ENCODE measurements at regions of chr21 and their contacts with region 1.

Region 1: DNA sequence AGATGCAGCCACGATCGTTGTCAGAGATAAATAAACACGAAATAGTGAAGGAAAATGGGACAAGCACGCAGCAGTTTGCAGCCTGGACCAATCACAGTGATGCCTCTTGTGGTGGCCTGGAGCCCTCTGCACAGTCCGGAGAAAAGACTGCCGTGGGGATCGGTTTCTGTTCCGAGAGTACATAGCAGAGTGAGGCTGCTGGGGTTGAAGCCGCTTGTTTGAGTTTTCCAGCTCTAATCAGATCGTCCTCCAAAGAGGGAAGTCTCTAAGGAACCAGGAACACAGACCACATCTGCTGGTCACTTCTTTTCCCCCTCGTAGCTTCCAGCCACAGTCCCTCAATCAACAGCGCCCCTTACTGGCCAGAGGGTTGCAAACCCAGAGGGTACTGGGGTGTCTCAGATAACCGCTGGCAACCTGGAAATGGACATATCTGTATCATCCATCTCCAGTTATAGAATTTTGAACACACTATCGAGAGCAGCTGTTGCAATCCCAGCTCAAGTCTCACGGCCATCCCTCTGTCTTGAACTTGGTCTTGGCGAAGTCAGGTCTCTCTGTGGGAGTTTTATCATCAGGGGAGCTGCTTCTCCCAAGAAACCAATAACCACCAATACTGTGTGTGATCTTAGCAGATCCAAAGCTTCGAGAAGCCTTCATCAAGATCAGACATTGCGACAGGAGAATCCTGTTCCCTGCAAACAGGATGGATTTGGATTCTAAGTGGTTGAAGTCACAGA is 57.4 kb downstream of the OLIG1 start:
- DNase-seq: peak; percentile 66
- H3K4me3 ChIP-seq: peak overlapping the region; percentile 6
- H3K27ac ChIP-seq: no peak overlapping the region
- H3K4me1 ChIP-seq: no peaks in the 10 kb centered on the region
- H3K27me3 ChIP-seq: peaks cover 70% of the 10 kb centered on the region
- CTCF ChIP-seq: peak; percentile 84

Region 2: DNA sequence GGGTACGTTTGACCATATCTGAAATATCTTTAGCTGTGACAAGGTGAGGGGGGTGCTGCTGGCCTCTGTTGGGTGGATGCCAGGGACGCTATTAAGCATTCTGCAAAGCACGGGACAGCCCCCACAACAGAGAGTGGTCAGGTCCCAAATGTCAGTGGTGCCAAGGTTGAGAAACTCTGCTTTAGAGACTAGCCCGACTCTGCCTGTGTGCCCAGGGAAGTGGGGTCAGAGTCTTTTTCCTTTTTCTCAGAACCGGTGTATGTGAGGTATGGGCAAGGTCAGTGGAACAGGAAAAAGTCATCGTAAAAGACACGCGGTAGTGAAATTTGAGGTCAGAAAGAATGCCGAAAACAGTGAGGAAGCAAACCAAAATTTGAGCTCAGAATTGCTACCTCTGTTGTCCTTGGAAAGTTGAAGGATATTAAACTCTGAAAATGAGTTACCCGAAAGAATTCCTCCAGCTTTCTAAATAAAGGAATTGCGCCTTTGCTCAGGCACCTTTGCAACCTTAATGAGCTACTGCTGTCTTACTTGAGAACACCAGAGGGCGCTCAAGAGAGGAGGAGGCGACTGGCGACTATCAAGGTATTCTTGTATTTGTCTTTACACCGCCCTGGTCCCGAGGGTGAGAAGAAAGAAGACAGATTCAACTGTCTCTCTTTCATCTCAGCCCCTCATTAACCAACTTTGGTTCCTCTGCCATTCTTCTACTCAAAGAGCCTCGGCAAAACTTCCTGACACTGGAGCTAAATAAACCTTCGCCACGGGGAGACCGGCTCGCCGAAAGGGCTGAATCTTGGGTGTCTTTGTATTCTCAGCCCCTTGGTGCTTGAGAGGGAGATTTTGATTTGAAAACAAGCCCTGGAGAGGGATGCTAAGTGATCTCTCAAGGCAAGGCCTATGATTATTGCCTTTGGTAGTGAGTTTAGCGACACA is 187.0 kb before region 1 on chr21:
- CTCF ChIA-PET with region 1: interaction called, 7 read pairs
- POLR2A ChIA-PET with region 1: no interaction called
- intact Hi-C with region 1: loop called (anchors 5 kb)
- DNase-seq: peak; percentile 68
- H3K4me3 ChIP-seq: no peak overlapping the region
- H3K27ac ChIP-seq: no peak overlapping the region
- H3K4me1 ChIP-seq: no peaks in the 10 kb centered on the region
- H3K27me3 ChIP-seq: peaks cover 23% of the 10 kb centered on the region
- CTCF ChIP-seq: peak; percentile 88

Region 3: GRCh38 chr21:32994305-32994704 is 133.0 kb before region 1 on chr21:
- CTCF ChIA-PET with region 1: interaction called, 5 read pairs
- POLR2A ChIA-PET with region 1: no interaction called
- intact Hi-C with region 1: loop called (anchors 1 kb)
- DNase-seq: peak; percentile 4
- H3K4me3 ChIP-seq: no peak overlapping the region
- H3K27ac ChIP-seq: no peak overlapping the region
- H3K4me1 ChIP-seq: no peaks in the 10 kb centered on the region
- H3K27me3 ChIP-seq: peaks cover 67% of the 10 kb centered on the region
- CTCF ChIP-seq: peak; percentile 52

Region 4: GRCh38 chr21:33036430-33037162 is 90.7 kb before region 1 on chr21:
- CTCF ChIA-PET with region 1: no interaction called
- POLR2A ChIA-PET with region 1: no interaction called
- intact Hi-C with region 1: no loop called
- DNase-seq: no peak
- H3K4me3 ChIP-seq: no peak overlapping the region
- H3K27ac ChIP-seq: no peak overlapping the region
- H3K4me1 ChIP-seq: no peaks in the 10 kb centered on the region
- H3K27me3 ChIP-seq: peaks cover 87% of the 10 kb centered on the region
- CTCF ChIP-seq: no peak

Region 5: GRCh38 chr21:33451634-33452071 is 324.3 kb after region 1 on chr21:
- CTCF ChIA-PET with region 1: no interaction called
- POLR2A ChIA-PET with region 1: interaction called, 10 read pairs
- intact Hi-C with region 1: no loop called
- DNase-seq: no peak
- H3K4me3 ChIP-seq: no peak overlapping the region
- H3K27ac ChIP-seq: no peak overlapping the region
- H3K4me1 ChIP-seq: no peaks in the 10 kb centered on the region
- H3K27me3 ChIP-seq: no peaks in the 10 kb centered on the region
- CTCF ChIP-seq: no peak